ENCODE measurements at regions of chr4 and their contacts with region 1.

Region 1: DNA sequence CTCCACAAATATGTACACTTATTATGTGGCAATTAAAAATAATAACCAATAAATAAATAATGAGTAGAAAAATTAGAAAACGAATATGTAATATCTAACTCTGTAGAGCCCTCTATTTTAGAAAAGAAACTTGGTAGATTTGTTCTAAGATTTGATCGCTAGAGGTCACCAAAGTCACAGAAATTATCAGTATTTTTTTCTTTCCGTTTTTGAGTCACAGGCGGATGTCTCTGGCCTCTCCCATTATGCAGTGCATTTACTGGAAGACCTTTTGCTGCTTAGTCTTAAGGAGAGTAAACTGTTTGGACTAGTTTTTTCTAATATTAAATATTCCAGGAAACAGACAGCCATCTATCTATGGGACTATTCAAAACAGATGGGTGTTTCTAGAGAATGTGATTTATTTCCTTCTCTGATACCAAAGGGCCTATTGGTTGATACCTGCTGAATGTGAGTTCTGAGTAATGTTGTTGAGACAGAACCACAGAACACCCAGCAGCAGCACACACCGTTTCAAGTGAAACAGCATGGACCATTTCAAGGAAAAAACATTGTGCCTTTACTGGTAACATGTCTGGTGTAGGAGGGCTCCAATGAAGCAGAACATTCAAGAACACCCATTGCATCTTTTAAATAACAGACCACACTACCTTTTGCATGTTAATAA is 34.0 kb upstream of the GYPA start:
- DNase-seq: peak; percentile 13
- H3K4me3 ChIP-seq: no peak overlapping the region
- H3K27ac ChIP-seq: no peak overlapping the region
- H3K4me1 ChIP-seq: no peaks in the 10 kb centered on the region
- H3K27me3 ChIP-seq: no peaks in the 10 kb centered on the region
- CTCF ChIP-seq: peak in 3 of 4 experiments; percentile 36 to 54 (median 54)
- POLR2A ChIP-seq: no peak

Region 2: GRCh38 chr4:144787365-144788258 is 613.1 kb after region 1 on chr4:
- intact Hi-C with region 1: loop called (anchors 5 kb)
- DNase-seq: no peak
- H3K4me3 ChIP-seq: no peak overlapping the region
- H3K27ac ChIP-seq: no peak overlapping the region
- H3K4me1 ChIP-seq: no peaks in the 10 kb centered on the region
- H3K27me3 ChIP-seq: no peaks in the 10 kb centered on the region
- CTCF ChIP-seq: peak in 3 of 4 experiments; percentile 24 to 52 (median 37)
- POLR2A ChIP-seq: no peak

Region 3: DNA sequence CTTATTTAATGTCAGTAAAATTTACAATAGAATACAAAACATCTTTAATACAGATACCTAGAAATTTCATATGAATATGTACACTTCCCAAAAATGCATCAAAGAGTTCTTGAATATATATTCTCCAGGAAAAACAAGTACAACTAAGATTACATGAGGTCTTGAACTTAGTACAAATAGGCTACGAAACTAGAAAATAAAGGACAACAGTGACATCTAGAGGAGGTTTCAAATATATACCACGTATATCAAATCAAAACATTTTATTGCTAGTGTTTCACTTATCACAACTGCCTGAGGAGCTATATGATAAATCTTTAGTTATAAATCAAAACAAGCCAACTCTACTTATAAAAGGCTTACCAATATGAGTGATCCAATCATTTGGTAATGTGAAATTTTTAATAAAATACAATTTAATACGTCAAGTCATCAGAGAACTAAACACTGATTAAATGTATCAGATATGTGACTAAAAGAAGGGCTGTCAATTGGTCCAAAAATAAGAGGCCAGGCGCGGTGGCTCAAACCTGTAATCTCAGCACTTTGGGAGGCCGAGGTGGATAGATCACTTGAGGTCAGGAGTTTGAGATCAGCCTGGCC is 886.9 kb after region 1 on chr4:
- intact Hi-C with region 1: loop called (anchors 5 kb)
- DNase-seq: no peak
- H3K4me3 ChIP-seq: no peak overlapping the region
- H3K27ac ChIP-seq: no peak overlapping the region
- H3K4me1 ChIP-seq: no peaks in the 10 kb centered on the region
- H3K27me3 ChIP-seq: no peaks in the 10 kb centered on the region
- CTCF ChIP-seq: peak in 3 of 4 experiments; percentile 49 to 53 (median 51)
- POLR2A ChIP-seq: no peak